A673 (cell line): ENCODE measurements at regions of chr1 and their contacts with region 1.

Region 1: DNA sequence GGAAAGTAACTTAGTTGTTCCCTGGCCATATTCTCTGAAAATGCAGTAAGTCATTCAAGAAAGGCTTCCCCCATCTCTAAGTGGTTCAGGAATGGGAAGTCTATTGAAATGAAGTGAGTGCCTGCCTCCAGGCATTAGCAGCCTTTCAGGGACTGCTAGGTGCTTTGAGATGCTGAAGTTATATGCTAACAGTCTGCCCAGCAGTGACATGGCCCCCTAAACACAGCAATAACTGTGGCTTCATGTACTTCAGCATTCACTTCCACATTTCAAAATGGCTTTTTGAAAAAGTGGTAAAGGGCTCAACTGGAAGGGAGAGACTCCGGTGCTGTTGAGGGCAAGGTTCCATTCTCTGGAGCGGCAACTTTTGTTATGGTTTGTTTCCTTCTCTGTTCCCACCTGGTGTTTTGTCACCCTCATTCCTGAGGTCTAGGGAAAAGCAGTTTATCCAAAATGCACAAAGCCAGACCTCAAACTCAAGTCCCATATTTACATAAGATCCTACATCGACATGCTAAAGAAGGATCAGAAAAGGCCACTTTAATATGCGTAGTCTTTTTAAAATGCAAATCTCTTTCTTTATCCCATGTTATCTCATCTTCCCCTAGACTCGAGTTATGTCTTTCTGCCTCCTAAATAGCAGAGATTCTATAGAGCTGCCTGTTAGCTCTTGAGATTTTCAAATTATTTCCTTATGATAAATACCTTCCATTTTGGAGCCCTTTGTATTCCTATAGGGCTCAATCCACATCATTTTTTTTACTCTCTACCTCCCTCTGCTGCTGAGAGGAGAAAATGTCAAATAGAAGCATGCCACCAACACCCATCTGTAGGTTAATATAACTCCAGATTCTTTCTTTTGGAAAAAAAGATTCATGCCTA is 34.2 kb upstream of the LRRC8C start:
- DNase-seq: peak; percentile 68
- H3K4me3 ChIP-seq: no peak overlapping the region
- H3K27ac ChIP-seq: no peak overlapping the region
- H3K4me1 ChIP-seq: peaks cover 4% of the 10 kb centered on the region
- H3K27me3 ChIP-seq: no peaks in the 10 kb centered on the region
- CTCF ChIP-seq: peak; percentile 75

Region 2: DNA sequence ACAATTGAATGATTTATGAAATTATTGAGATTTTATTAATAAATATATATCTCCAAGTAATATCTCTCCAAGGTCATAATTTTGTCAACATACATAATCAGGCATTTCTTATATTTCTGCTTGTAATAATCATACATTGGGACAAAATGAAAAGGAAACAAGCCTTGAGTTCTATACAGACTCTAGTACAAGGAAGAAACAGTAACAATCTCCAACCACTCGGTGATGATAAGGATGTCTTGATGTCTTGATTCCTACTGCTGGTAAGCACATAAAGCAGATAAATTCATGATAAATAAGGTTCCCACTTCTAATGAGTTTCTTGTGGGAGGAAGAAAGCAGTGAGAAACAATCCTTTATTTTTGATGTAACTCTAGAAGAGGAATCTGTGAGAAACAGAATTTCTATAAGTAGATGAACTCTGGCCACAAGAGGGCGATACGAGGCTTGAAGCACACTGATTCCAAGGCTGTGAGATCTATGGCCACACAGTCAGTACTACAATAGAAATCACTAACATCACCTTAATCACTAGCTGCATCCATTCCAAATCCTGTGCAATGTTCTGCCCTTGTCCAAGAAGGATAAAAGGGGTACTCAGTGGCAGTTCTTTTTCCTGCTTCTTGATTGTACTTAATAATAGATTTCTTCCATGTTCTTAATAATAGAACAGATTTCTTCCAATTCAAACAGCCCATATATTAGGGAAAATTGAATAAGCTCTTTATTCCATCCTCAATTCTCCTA is 115.5 kb before region 1 on chr1:
- CTCF ChIA-PET with region 1: interaction called, 7 read pairs
- POLR2A ChIA-PET with region 1: no interaction called
- intact Hi-C with region 1: loop called (anchors 1 kb)
- DNase-seq: peak; percentile 80
- H3K4me3 ChIP-seq: no peak overlapping the region
- H3K27ac ChIP-seq: no peak overlapping the region
- H3K4me1 ChIP-seq: no peaks in the 10 kb centered on the region
- H3K27me3 ChIP-seq: no peaks in the 10 kb centered on the region
- CTCF ChIP-seq: peak; percentile 81

Region 3: GRCh38 chr1:89516055-89516454 is 82.6 kb before region 1 on chr1:
- CTCF ChIA-PET with region 1: no interaction called
- POLR2A ChIA-PET with region 1: no interaction called
- intact Hi-C with region 1: loop called (anchors 2 kb)
- DNase-seq: peak; percentile 52
- H3K4me3 ChIP-seq: no peak overlapping the region
- H3K27ac ChIP-seq: no peak overlapping the region
- H3K4me1 ChIP-seq: no peaks in the 10 kb centered on the region
- H3K27me3 ChIP-seq: no peaks in the 10 kb centered on the region
- CTCF ChIP-seq: no peak